Activated CD8-positive, alpha-beta memory T cell treated with anti-CD3 and anti-CD28 coated beads, Interleukin-2, amount 10 ng/mL, durations not matched to agents 7 days and 5 days (primary cell): ENCODE measurements at regions of chr19 and their contacts with region 1.

Region 1: GRCh38 chr19:39846176-39846677 is at the start of gene FBL:
- DNase-seq: peak; percentile 98
- ATAC-seq: peak; percentile 90
- H3K4me3 Mint-ChIP-seq: peak within 1 kb of the TSS; percentile 88
- H3K27ac Mint-ChIP-seq: peak within 1 kb of the TSS; percentile 90
- H3K4me1 Mint-ChIP-seq: peaks cover 42% of the 10 kb centered on the region
- H3K27me3 Mint-ChIP-seq: no peaks in the 10 kb centered on the region
- total RNA-seq, gene FBL: 374 to 453 TPM

Region 2: GRCh38 chr19:39765091-39766076 is 80.8 kb before region 1 on chr19:
- CTCF ChIA-PET with region 1: interaction called, 10 read pairs
- DNase-seq: no peak
- ATAC-seq: no peak
- H3K4me3 Mint-ChIP-seq: no peak overlapping the region
- H3K27ac Mint-ChIP-seq: no peak overlapping the region
- H3K4me1 Mint-ChIP-seq: peaks cover 8% of the 10 kb centered on the region
- H3K27me3 Mint-ChIP-seq: peaks cover 41% of the 10 kb centered on the region

Region 3: GRCh38 chr19:39810424-39810823 is 35.8 kb before region 1 on chr19:
- CTCF ChIA-PET with region 1: interaction called, 13 read pairs
- DNase-seq: no peak
- ATAC-seq: no peak
- H3K4me3 Mint-ChIP-seq: no peak overlapping the region
- H3K27ac Mint-ChIP-seq: no peak overlapping the region
- H3K4me1 Mint-ChIP-seq: no peaks in the 10 kb centered on the region
- H3K27me3 Mint-ChIP-seq: peaks cover under 1% of the 10 kb centered on the region

Region 4: GRCh38 chr19:39833464-39834286 is 12.6 kb before region 1 on chr19 and contains the start of gene DYRK1B:
- CTCF ChIA-PET with region 1: interaction called, 70 read pairs
- DNase-seq: peak; percentile 99
- ATAC-seq: peak; percentile 90
- H3K4me3 Mint-ChIP-seq: peak within 1 kb of the TSS; percentile 69
- H3K27ac Mint-ChIP-seq: peak within 1 kb of the TSS; percentile 79
- H3K4me1 Mint-ChIP-seq: peaks cover 28% of the 10 kb centered on the region
- H3K27me3 Mint-ChIP-seq: no peaks in the 10 kb centered on the region
- total RNA-seq, gene DYRK1B: 7.5 to 7.7 TPM